H1 (cell line): ENCODE measurements at regions of chr9 and their contacts with region 1.

Region 1: GRCh38 chr9:88041447-88041846 is 67.1 kb upstream of the CDK20 start:
- DNase-seq: no peak
- H3K4me3 ChIP-seq: no peak overlapping the region
- H3K27ac ChIP-seq: no peak overlapping the region
- H3K4me1 ChIP-seq: peaks cover 0 to 15% (median 8%) of the 10 kb centered on the region in 4 experiments; a peak in 4 of 7 replicates
- H3K27me3 ChIP-seq: no peaks in the 10 kb centered on the region
- CTCF ChIP-seq: peak in 2 of 3 experiments; percentile 60 to 79; a peak in 3 of 4 replicates
- EP300 ChIP-seq: no peak
- POLR2A ChIP-seq: no peak
- RAD21 ChIP-seq: peak; percentile 86 to 93

Region 2: GRCh38 chr9:87599901-87600610 is 441.4 kb before region 1 on chr9:
- CTCF ChIA-PET with region 1: no interaction called
- POLR2A ChIA-PET with region 1: no interaction called
- DNase-seq: no peak
- H3K4me3 ChIP-seq: no peak overlapping the region
- H3K27ac ChIP-seq: no peak overlapping the region
- H3K4me1 ChIP-seq: peaks cover 5 to 10% (median 9%) of the 10 kb centered on the region in 4 experiments
- H3K27me3 ChIP-seq: no peaks in the 10 kb centered on the region
- CTCF ChIP-seq: no peak
- EP300 ChIP-seq: no peak
- POLR2A ChIP-seq: no peak
- RAD21 ChIP-seq: no peak

Region 3: GRCh38 chr9:87898151-87898550 is 143.3 kb before region 1 on chr9:
- CTCF ChIA-PET with region 1: no interaction called
- POLR2A ChIA-PET with region 1: no interaction called
- DNase-seq: no peak
- H3K4me3 ChIP-seq: no peak overlapping the region
- H3K27ac ChIP-seq: no peak overlapping the region
- H3K4me1 ChIP-seq: no peaks in the 10 kb centered on the region
- H3K27me3 ChIP-seq: no peaks in the 10 kb centered on the region
- CTCF ChIP-seq: no peak
- EP300 ChIP-seq: no peak
- POLR2A ChIP-seq: no peak
- RAD21 ChIP-seq: no peak

Region 4: GRCh38 chr9:88011005-88011766 is 30.3 kb before region 1 on chr9:
- CTCF ChIA-PET with region 1: interaction called, 27 read pairs
- POLR2A ChIA-PET with region 1: interaction called, 3 read pairs
- DNase-seq: no peak
- H3K4me3 ChIP-seq: no peak overlapping the region
- H3K27ac ChIP-seq: no peak overlapping the region
- H3K4me1 ChIP-seq: peaks cover 0 to 2% (median 0%) of the 10 kb centered on the region in 4 experiments; a peak in 1 of 7 replicates
- H3K27me3 ChIP-seq: no peaks in the 10 kb centered on the region
- CTCF ChIP-seq: peak in 2 of 3 experiments; percentile 31 to 34; a peak in 2 of 4 replicates
- EP300 ChIP-seq: no peak
- POLR2A ChIP-seq: no peak
- RAD21 ChIP-seq: peak in 1 of 2 experiments; percentile 38; a peak in 2 of 4 replicates

Region 5: GRCh38 chr9:88025399-88026117 is 15.9 kb before region 1 on chr9:
- CTCF ChIA-PET with region 1: interaction called, 19 read pairs
- POLR2A ChIA-PET with region 1: interaction called, 4 read pairs
- DNase-seq: no peak
- H3K4me3 ChIP-seq: no peak overlapping the region
- H3K27ac ChIP-seq: no peak overlapping the region
- H3K4me1 ChIP-seq: peaks cover 0 to 13% (median 7%) of the 10 kb centered on the region in 4 experiments; a peak in 4 of 7 replicates
- H3K27me3 ChIP-seq: no peaks in the 10 kb centered on the region
- CTCF ChIP-seq: peak in 2 of 3 experiments; percentile 20 to 27; a peak in 2 of 4 replicates
- EP300 ChIP-seq: no peak
- POLR2A ChIP-seq: no peak
- RAD21 ChIP-seq: 0 out of 4 replicates have a peak, but pooled peaks of 1 of the 2 experiments have one; percentile 19

Region 6: GRCh38 chr9:88053856-88054501 is 12.5 kb after region 1 on chr9:
- CTCF ChIA-PET with region 1: interaction called, 15 read pairs
- POLR2A ChIA-PET with region 1: interaction called, 3 read pairs
- DNase-seq: no peak
- H3K4me3 ChIP-seq: no peak overlapping the region
- H3K27ac ChIP-seq: no peak overlapping the region
- H3K4me1 ChIP-seq: peaks cover 0 to 7% (median 0%) of the 10 kb centered on the region in 4 experiments; a peak in 2 of 7 replicates
- H3K27me3 ChIP-seq: no peaks in the 10 kb centered on the region
- CTCF ChIP-seq: no peak
- EP300 ChIP-seq: no peak
- POLR2A ChIP-seq: no peak
- RAD21 ChIP-seq: no peak

Region 7: GRCh38 chr9:88084357-88085183 is 43.1 kb after region 1 on chr9:
- CTCF ChIA-PET with region 1: no interaction called
- POLR2A ChIA-PET with region 1: no interaction called
- DNase-seq: no peak
- H3K4me3 ChIP-seq: no peak overlapping the region
- H3K27ac ChIP-seq: no peak overlapping the region
- H3K4me1 ChIP-seq: no peaks in the 10 kb centered on the region
- H3K27me3 ChIP-seq: no peaks in the 10 kb centered on the region
- CTCF ChIP-seq: no peak
- EP300 ChIP-seq: no peak
- POLR2A ChIP-seq: no peak
- RAD21 ChIP-seq: no peak